ENCODE measurements at regions of chr1 and their contacts with region 1.

Region 1: GRCh38 chr1:227016990-227017389 is 76.9 kb downstream of the COQ8A start:
- DNase-seq: no peak

Region 2: GRCh38 chr1:227004796-227005195 is 12.2 kb before region 1 on chr1:
- intact Hi-C with region 1: loop called (anchors 1 kb)
- DNase-seq: no peak

Measured in cardiac septum (tissue), 1 donor.